ENCODE measurements at regions of chr6 and their contacts with region 1.

Region 1: DNA sequence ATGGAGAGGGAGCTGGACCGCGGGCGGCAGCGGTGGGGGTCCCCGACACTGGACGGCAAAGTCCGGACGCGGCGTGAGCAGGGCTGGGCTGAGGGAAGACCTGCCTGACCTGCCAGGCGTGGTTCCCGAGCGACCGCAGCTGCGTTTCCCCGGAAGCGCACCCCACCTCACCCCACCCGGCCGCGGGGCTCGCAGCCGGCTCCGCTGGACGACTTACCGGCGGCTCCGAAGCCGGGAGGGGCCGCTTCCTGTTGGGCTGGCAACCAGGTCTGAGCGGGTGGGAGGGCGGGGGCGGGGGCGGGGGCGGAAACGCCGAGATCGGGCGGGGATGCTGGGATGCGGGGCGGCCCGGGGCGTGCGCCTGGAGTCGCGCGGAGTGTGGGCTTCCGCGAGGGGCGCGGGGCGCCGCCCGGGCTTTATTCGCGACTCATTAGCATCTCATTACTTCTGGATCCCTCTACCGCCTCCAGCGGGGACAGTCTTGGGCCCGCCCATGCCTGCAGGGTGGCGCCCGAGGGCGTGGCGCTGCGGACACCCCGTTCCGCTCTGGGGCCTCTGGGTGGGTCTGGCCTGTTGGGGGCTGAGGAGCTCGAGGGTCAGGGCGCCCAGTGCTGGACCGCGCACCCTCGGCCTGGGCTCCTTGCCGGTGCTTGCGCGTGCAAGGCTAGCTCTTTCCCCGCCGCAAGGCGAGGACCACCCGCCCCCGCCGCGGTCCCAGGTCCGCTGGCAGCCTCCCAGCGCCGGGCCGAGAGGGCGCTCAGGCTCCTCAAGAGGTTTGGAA is at the start of gene MICAL1:
- DNase-seq: peak; percentile 82
- ATAC-seq: peak; percentile 58
- H3K4me3 Mint-ChIP-seq: peak within 1 kb of the TSS; percentile 97
- H3K27ac Mint-ChIP-seq: peak within 1 kb of the TSS; percentile 98
- H3K4me1 Mint-ChIP-seq: peaks cover 80% of the 10 kb centered on the region
- H3K27me3 Mint-ChIP-seq: no peaks in the 10 kb centered on the region
- CTCF ChIP-seq: no peak
- total RNA-seq, gene MICAL1: 104 and 120 TPM in 2 replicates

Region 2: DNA sequence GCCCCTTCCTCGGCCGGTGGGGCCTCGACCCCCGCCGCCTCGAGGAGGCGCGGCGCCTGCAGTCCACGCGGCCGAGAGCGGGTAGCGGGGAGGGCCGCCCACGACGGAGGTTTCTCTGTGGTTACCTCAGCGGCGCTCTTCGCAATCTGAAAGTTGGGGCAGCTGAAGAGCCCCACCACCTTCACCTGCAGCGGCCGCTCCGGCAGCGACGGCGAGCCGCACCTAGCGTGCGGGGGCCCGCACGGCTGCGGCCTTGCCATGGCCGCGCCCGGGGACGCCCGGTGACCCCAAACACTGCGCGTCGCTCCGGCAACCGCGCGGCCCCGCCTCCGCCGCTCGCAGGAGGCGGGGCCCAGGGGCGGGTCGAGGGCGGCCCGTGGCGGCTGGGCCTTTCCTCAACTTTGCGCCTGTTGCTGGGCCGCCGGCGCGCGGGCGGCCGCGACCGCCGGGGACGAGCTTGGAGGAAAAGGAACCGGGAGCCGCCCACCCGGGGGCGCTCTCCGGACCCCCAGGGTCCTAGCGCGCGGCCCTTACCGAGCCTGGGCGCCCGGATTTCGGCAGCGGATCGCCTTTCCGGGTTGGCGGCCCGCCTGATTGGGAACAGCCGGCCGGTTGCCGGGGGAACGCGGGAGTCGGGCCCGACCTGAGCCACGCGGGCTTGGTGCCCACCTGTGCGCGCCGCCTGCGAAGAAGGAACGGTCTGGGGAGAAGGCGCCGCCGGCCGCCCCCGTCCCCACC is 15.2 kb before region 1 on chr6 and contains the starts of genes PPIL6 and SMPD2:
- CTCF ChIA-PET with region 1: interaction called, 31 read pairs
- POLR2A ChIA-PET with region 1: interaction called, 154 read pairs
- intact Hi-C with region 1: loop called (anchors 1 kb)
- DNase-seq: peak; percentile 89
- ATAC-seq: peak; percentile 83
- H3K4me3 Mint-ChIP-seq: peak within 1 kb of the TSS; percentile 96
- H3K27ac Mint-ChIP-seq: peak within 1 kb of the TSS; percentile 95
- H3K4me1 Mint-ChIP-seq: peaks cover 34% of the 10 kb centered on the region
- H3K27me3 Mint-ChIP-seq: no peaks in the 10 kb centered on the region
- CTCF ChIP-seq: no peak
- total RNA-seq, gene PPIL6: 0.73 and 0.91 TPM in 2 replicates
- total RNA-seq, gene SMPD2: 24.9 and 28.2 TPM in 2 replicates

Region 3: DNA sequence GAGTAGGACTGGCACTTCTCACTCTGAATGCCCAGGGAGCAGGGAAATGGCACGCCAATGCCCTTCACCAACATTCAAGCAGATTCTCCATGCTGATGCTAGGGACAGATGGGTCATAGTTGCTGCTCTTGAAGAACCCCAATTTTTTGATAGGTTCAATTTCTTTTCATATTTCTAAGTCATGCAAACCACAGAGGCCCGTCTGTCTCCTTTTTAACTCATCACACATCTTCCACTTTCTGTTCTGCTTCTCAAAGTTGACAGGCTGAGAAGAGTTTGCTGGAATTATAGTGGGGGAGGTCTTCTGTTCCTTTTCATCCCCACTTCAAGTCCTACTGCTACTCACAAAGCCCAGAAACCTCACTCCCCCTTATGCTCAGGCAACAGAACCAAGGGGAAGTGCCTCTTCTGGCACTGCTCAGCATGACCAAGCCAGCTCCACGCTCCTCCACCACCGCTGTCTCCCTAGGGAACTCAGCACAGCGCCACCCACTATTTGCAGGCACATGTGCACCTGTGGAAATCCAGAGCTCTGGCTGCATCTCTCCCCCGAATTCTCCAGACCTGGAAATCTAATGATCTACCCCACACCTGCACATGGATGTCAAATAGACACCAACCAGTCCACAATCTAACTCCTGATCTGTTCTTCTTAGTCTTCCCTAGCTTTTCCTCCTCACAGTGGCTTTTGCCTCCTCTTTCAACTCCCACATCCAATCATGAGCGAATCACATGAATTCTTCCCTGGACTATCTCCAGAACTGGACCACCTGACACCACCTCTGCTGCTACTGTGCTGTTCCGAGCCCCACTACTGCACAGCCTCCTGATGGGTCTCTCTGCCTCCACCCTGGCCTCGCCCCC is 16.7 kb after region 1 on chr6:
- CTCF ChIA-PET with region 1: interaction called, 4 read pairs
- POLR2A ChIA-PET with region 1: interaction called, 14 read pairs
- intact Hi-C with region 1: loop called (anchors 1 kb)
- DNase-seq: peak; percentile 42
- ATAC-seq: peak; percentile 96
- H3K4me3 Mint-ChIP-seq: peak overlapping the region; percentile 11
- H3K27ac Mint-ChIP-seq: peak overlapping the region; percentile 67
- H3K4me1 Mint-ChIP-seq: peaks cover 64% of the 10 kb centered on the region
- H3K27me3 Mint-ChIP-seq: no peaks in the 10 kb centered on the region
- CTCF ChIP-seq: no peak

Region 4: DNA sequence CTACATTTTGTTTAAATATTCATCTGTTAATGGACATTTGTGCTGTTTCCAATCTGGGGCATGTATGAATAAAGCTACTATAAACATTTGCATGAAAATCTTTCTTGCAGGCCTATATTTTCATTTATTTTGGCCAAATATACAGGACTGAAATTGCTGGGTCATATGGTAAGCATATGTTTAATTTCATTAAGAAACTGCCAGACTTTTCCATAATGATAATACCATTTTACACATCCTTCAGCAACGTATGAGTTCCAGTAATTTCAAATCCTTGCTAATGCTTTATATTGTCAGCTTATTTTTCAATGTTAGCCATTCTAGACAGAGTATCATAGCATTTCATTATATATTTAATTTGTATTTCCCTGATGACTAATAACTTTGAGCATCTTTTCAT is 573.5 kb after region 1 on chr6:
- CTCF ChIA-PET with region 1: no interaction called
- POLR2A ChIA-PET with region 1: no interaction called
- intact Hi-C with region 1: no loop called
- DNase-seq: no peak
- ATAC-seq: no peak
- H3K4me3 Mint-ChIP-seq: no peak overlapping the region
- H3K27ac Mint-ChIP-seq: no peak overlapping the region
- H3K4me1 Mint-ChIP-seq: no peaks in the 10 kb centered on the region
- H3K27me3 Mint-ChIP-seq: peaks cover 2% of the 10 kb centered on the region
- CTCF ChIP-seq: no peak

Measured in activated B cell treated with CpG ODN at 0.5 μM for 24 hours (primary cell).